ENCODE measurements at regions of chr10 and their contacts with region 1.

Region 1: GRCh38 chr10:31031558-31032257 is at the start of gene ZNF438:
- DNase-seq: peak in 4 of 5 donors; percentile 96 to 98 (median 96)
- H3K4me3 ChIP-seq: peak within 1 kb of the TSS; percentile 77 to 96
- H3K4me3 Mint-ChIP-seq: peak within 1 kb of the TSS; percentile 86 to 93 (median 90)
- H3K27ac ChIP-seq: peak within 1 kb of the TSS; percentile 92
- H3K27ac Mint-ChIP-seq: peak within 1 kb of the TSS; percentile 98 to 99 (median 99)
- H3K4me1 ChIP-seq: peaks cover 13% of the 10 kb centered on the region
- H3K4me1 Mint-ChIP-seq: peaks cover 9 to 25% (median 15%) of the 10 kb centered on the region in 4 donors
- H3K27me3 ChIP-seq: no peaks in the 10 kb centered on the region
- H3K27me3 Mint-ChIP-seq: no peaks in the 10 kb centered on the region
- total RNA-seq, gene ZNF438: 3.7 to 4.1 TPM

Region 2: DNA sequence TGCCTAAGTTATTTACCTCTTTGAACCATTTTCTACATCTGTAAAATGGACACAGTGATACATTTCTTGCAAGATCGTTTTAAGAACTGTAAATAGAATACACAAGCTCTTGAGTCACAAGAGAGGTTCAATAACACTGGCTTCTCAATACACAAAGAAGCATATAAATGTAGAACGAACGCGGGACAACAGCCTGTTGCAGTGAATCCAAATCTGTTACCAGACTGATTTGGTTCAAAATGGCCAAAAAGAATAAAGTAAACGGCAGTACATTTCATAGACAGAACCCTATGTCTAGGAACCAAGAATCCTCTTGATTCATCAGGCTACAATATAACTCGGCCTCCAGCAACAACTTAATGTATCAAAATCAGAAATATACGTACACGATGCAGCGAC is 683.3 kb before region 1 on chr10:
- CTCF ChIA-PET with region 1: no interaction called
- POLR2A ChIA-PET with region 1: no interaction called
- intact Hi-C with region 1: loop called (anchors 5 kb)
- DNase-seq: no peak
- H3K4me3 ChIP-seq: peak overlapping the region; percentile 82 to 96
- H3K4me3 Mint-ChIP-seq: peak overlapping the region; percentile 92 to 98 (median 94)
- H3K27ac ChIP-seq: peak overlapping the region; percentile 79
- H3K27ac Mint-ChIP-seq: peak overlapping the region; percentile 90 to 98 (median 94)
- H3K4me1 ChIP-seq: peaks cover 42% of the 10 kb centered on the region
- H3K4me1 Mint-ChIP-seq: peaks cover 35 to 60% (median 50%) of the 10 kb centered on the region in 4 donors
- H3K27me3 ChIP-seq: no peaks in the 10 kb centered on the region
- H3K27me3 Mint-ChIP-seq: no peaks in the 10 kb centered on the region

Region 3: GRCh38 chr10:30529373-30529998 is 502.2 kb before region 1 on chr10:
- CTCF ChIA-PET with region 1: no interaction called
- POLR2A ChIA-PET with region 1: interaction called, 4 read pairs
- intact Hi-C with region 1: loop called (anchors 5 kb)
- DNase-seq: peak; percentile 83 to 91 (median 87)
- H3K4me3 ChIP-seq: peak overlapping the region; percentile 48 to 56
- H3K4me3 Mint-ChIP-seq: peak overlapping the region; percentile 83 to 94 (median 88)
- H3K27ac ChIP-seq: peak overlapping the region; percentile 83
- H3K27ac Mint-ChIP-seq: peak overlapping the region; percentile 96 to 100 (median 98)
- H3K4me1 ChIP-seq: peaks cover 72% of the 10 kb centered on the region
- H3K4me1 Mint-ChIP-seq: peaks cover 38 to 73% (median 54%) of the 10 kb centered on the region in 4 donors
- H3K27me3 ChIP-seq: no peaks in the 10 kb centered on the region
- H3K27me3 Mint-ChIP-seq: no peaks in the 10 kb centered on the region

Region 4: DNA sequence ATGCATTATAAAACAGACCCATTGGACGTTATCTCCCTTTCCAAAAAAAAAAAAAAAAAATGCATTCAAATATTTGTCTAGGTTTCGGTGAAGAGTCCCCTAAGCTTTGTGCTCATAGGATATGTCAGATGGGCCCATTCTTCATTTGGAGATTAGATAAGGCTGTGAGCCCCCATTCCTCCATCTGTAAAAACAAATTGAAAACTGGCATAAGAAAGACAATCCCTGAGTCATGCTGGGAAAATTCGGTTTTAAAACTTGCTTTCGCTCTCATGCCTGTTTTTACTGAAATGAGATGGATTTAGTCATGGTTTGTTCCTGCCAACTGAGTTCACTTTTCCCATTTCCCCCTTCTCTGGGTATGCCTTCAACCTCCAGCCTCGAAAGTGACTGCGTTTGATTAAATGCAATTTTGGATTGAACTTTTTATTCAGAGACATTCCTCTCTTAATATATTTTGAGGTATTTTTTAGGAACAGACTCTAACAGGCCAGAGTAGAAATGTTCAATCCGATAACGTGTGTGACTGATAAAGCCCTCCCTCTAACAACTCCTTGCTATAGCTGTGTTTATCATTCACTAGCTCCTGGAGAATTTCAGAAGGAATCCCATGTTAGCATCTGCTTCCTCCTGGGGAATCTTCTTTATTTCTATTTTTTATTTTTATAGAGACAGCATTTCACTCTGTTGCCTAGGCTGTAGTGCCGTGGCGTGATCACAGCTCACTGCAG is 211.3 kb before region 1 on chr10:
- CTCF ChIA-PET with region 1: no interaction called
- POLR2A ChIA-PET with region 1: no interaction called
- intact Hi-C with region 1: no loop called
- DNase-seq: no peak
- H3K4me3 ChIP-seq: no peak overlapping the region
- H3K4me3 Mint-ChIP-seq: no peak overlapping the region
- H3K27ac ChIP-seq: no peak overlapping the region
- H3K27ac Mint-ChIP-seq: no peak overlapping the region
- H3K4me1 ChIP-seq: no peaks in the 10 kb centered on the region
- H3K4me1 Mint-ChIP-seq: no peaks in the 10 kb centered on the region
- H3K27me3 ChIP-seq: no peaks in the 10 kb centered on the region
- H3K27me3 Mint-ChIP-seq: peaks cover under 1 to 5% of the 10 kb centered on the region in 2 donors

Region 5: GRCh38 chr10:30877111-30877510 is 154.6 kb before region 1 on chr10:
- CTCF ChIA-PET with region 1: no interaction called
- POLR2A ChIA-PET with region 1: no interaction called
- intact Hi-C with region 1: no loop called
- DNase-seq: no peak
- H3K4me3 ChIP-seq: no peak overlapping the region
- H3K4me3 Mint-ChIP-seq: no peak overlapping the region
- H3K27ac ChIP-seq: no peak overlapping the region
- H3K27ac Mint-ChIP-seq: no peak overlapping the region
- H3K4me1 ChIP-seq: no peaks in the 10 kb centered on the region
- H3K4me1 Mint-ChIP-seq: no peaks in the 10 kb centered on the region
- H3K27me3 ChIP-seq: no peaks in the 10 kb centered on the region
- H3K27me3 Mint-ChIP-seq: no peaks in the 10 kb centered on the region

Region 6: GRCh38 chr10:30999070-30999712 is 32.5 kb before region 1 on chr10:
- CTCF ChIA-PET with region 1: interaction called, 8 read pairs
- POLR2A ChIA-PET with region 1: interaction called, 22 read pairs
- intact Hi-C with region 1: loop called (anchors 2 kb)
- DNase-seq: peak in 1 of 5 donors; percentile 7
- H3K4me3 ChIP-seq: peak overlapping the region in 1 of 2 donors; percentile 31
- H3K4me3 Mint-ChIP-seq: peak overlapping the region; percentile 64 to 83 (median 81)
- H3K27ac ChIP-seq: peak overlapping the region; percentile 44
- H3K27ac Mint-ChIP-seq: peak overlapping the region; percentile 66 to 95 (median 88)
- H3K4me1 ChIP-seq: peaks cover 19% of the 10 kb centered on the region
- H3K4me1 Mint-ChIP-seq: peaks cover 20 to 38% (median 28%) of the 10 kb centered on the region in 4 donors
- H3K27me3 ChIP-seq: no peaks in the 10 kb centered on the region
- H3K27me3 Mint-ChIP-seq: no peaks in the 10 kb centered on the region

Region 7: DNA sequence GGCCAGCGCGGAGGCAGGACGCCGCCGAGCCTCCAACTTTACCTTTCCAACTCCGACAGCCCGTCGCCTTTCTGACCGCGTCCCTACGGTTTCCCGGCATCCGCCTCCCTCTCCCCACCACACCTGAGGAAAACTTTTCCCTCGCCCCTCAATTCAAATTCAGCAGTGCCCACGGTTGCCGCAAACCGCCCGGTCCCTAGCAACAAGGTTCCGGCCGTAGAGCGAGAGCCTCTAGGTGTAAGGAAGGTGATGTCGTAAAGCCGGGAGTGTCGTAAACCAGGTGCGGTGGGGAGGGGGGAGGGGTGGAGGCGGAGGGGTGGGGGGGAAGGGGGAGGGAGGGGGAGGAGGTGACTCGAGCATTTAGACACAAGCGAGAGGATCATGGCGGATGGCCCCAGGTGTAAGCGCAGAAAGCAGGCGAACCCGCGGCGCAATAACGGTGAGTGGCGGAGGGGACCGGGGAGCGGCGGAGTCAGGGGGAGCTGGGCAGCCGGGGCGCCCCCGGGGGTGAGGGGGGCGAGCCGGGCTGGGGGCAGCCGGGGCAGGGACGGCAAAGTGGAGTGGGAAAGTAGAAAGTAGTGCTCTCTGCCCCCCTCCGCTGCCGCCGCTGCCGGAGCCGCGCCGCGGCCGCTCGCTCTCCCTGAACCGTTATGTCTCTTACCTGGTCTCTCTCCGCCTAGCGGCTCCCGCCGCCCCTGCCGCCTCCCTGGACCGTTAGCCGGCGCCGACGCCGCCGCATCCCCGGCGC is 287.3 kb after region 1 on chr10 and contains the start of gene ZEB1:
- CTCF ChIA-PET with region 1: interaction called, 5 read pairs
- POLR2A ChIA-PET with region 1: interaction called, 18 read pairs
- intact Hi-C with region 1: loop called (anchors 1 kb)
- DNase-seq: peak; percentile 91 to 97 (median 92)
- H3K4me3 ChIP-seq: peak within 1 kb of the TSS; percentile 55 to 74
- H3K4me3 Mint-ChIP-seq: peak within 1 kb of the TSS; percentile 97 to 100 (median 99)
- H3K27ac ChIP-seq: peak within 1 kb of the TSS; percentile 88
- H3K27ac Mint-ChIP-seq: peak within 1 kb of the TSS; percentile 94 to 100 (median 99)
- H3K4me1 ChIP-seq: peaks cover 30% of the 10 kb centered on the region
- H3K4me1 Mint-ChIP-seq: peaks cover 24 to 53% (median 38%) of the 10 kb centered on the region in 4 donors
- H3K27me3 ChIP-seq: no peaks in the 10 kb centered on the region
- H3K27me3 Mint-ChIP-seq: no peaks in the 10 kb centered on the region
- total RNA-seq, gene ZEB1: 68.7 to 70.6 TPM

Region 8: DNA sequence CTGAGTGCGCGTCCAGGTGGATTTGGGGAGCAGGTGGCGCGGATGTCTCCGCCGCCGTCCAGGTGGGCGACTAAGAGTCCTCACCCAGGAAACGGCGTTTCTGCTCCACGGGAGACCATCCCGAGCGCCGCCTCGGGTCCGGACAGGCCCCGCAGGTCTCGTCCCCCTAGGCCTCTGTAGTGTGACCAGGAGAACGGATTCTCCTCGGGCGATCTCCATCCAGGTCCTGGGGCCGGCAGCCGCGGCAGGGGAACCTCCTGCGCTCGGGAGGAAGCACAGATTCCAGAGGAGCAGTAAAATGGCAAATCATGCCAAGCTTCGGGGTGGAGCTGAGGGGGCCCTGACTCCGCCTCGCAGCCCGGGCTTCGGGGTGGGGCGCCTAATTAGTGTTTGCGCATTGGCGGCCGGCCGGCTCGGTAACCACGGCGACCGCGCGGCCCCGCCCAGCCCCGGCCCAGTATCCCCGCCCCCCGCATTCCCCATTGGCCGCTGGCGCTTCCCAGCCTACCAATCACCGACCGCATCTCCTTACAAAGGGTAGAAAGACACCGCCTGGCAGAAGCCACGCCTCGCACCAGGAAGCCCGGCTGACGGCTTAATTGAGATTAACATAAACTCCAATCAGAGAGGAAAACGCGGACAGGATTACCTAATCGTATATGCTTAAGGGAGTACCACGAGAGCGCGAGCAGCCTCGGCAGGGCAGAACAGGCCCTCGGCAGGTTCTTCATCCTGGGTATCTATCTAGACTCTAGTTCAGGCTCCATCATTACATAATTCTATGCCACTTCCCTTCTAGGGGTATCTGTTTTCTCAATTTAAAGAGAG is 728.3 kb after region 1 on chr10:
- CTCF ChIA-PET with region 1: interaction called, 4 read pairs
- POLR2A ChIA-PET with region 1: interaction called, 10 read pairs
- intact Hi-C with region 1: loop called (anchors 1 kb)
- DNase-seq: peak; percentile 92 to 99 (median 97)
- H3K4me3 ChIP-seq: peak overlapping the region; percentile 66 to 90
- H3K4me3 Mint-ChIP-seq: peak overlapping the region; percentile 75 to 92 (median 86)
- H3K27ac ChIP-seq: peak overlapping the region; percentile 78
- H3K27ac Mint-ChIP-seq: peak overlapping the region; percentile 94 to 99 (median 99)
- H3K4me1 ChIP-seq: peaks cover 10% of the 10 kb centered on the region
- H3K4me1 Mint-ChIP-seq: peaks cover 9 to 17% (median 13%) of the 10 kb centered on the region in 4 donors
- H3K27me3 ChIP-seq: no peaks in the 10 kb centered on the region
- H3K27me3 Mint-ChIP-seq: no peaks in the 10 kb centered on the region

Region 9: GRCh38 chr10:31928549-31929260 is 897.0 kb after region 1 on chr10 and contains the start of gene ARHGAP12:
- CTCF ChIA-PET with region 1: no interaction called
- POLR2A ChIA-PET with region 1: no interaction called
- intact Hi-C with region 1: loop called (anchors 5 kb)
- DNase-seq: peak; percentile 84 to 88 (median 85)
- H3K4me3 ChIP-seq: peak within 1 kb of the TSS; percentile 86 to 91
- H3K4me3 Mint-ChIP-seq: peak within 1 kb of the TSS; percentile 93 to 95 (median 93)
- H3K27ac ChIP-seq: peak within 1 kb of the TSS; percentile 66
- H3K27ac Mint-ChIP-seq: peak within 1 kb of the TSS; percentile 66 to 97 (median 93)
- H3K4me1 ChIP-seq: peaks cover 54% of the 10 kb centered on the region
- H3K4me1 Mint-ChIP-seq: peaks cover 36 to 51% (median 44%) of the 10 kb centered on the region in 4 donors
- H3K27me3 ChIP-seq: no peaks in the 10 kb centered on the region
- H3K27me3 Mint-ChIP-seq: no peaks in the 10 kb centered on the region
- total RNA-seq, gene ARHGAP12: 30.1 to 31.2 TPM